ENCODE measurements at regions of chr10 and their contacts with region 1.

Region 1: DNA sequence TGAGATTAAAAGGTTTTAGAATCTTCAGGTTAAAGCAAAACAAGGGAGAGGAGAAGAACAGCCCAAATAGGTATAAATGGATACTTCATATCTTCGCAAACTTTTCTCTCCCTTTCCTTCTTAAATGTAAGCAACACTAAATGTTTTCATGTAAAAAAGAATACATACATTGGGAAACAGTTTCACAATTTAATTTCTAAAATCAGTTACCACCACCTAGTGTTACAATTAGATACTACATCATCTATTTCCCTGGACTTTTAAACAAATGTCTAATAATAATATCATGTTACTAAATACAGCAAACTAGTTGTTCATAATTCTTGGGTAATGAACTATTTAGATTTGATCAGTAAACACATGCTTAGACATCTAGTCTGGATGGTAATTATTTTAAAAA is 35.8 kb downstream of the MINDY3 start:
- DNase-seq: no peak
- ATAC-seq: no peak

Region 2: GRCh38 chr10:15433850-15434537 is 390.5 kb before region 1 on chr10:
- intact Hi-C with region 1: loop called (anchors 5 kb)
- DNase-seq: no peak
- ATAC-seq: peak; percentile 79

Region 3: DNA sequence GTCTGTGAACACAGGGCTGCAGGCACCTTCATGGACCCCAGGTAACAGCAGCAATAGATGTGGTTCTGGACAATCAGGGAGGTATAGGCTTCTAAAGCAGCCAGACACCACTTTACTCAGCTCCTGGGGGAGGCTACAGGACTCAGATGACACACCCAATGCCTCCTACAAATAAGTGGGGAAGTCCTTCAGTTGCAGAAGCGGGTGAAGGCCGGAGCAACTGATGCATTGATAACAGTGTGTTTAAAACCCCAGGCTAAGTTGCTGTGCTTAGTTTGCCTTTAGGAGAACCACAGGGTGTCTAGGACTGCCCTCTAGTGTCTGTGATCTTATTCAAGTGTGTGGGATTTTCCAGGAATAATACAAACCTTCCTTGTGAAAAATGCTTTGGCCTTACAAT is 98.9 kb before region 1 on chr10:
- intact Hi-C with region 1: loop called (anchors 10 kb)
- DNase-seq: no peak
- ATAC-seq: peak; percentile 57

Region 4: DNA sequence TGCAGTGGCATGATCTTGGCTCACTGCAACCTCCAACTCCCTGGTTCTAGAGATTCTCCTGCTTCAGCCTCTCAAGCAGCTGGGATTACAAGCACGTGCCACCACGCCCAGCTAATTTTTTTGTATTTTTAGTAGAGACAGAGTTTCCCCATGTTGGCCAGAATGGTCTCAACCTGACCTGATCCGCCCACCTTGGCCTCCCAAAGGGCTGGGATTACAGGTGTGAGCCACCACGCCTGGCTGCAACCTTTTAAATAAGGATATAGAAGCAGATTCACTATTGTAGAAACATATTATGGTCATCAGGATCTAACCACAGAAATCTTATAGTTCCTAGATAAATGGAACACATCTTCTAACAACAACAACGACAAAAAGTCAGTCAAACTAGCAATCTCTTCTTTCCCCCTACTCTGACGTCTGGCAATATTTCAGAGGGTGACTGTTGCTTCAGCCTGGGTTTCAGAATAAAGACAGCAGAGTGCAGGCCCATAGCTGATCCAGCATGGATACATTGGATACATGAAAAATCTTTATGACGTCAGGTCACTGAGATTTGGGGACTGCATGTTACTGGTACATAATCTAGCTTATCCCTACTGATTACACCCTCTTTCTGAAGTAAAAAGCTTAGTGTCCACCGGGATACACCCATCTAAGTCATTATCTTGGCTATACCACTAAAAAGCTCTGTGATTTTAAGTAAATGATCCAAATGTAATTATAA is 148.4 kb after region 1 on chr10:
- intact Hi-C with region 1: no loop called
- DNase-seq: no peak
- ATAC-seq: no peak